HepG2 (cell line): ENCODE measurements at regions of chr6 and their contacts with region 1.

Region 1: DNA sequence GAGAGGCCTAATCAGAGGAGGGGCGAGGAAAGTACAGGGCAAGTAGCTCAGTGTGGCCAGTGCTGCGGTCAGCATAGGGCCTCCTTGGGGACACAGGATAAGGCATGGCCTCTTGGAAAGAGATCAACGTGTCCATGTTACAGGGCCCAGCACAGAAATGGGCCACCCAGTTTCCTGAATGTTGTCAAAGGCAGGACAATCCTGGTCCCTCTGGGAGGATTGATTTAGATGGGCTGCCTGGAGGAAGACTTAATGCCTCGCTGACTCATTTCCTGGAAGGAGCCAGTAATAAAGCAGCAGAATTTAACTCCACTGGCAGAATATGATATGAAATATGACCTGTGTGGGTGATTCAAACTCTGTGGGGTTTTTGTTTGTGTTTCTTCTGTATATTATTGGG is 16.6 kb downstream of the DDO start:
- DNase-seq: no peak
- ATAC-seq: no peak
- H3K4me3 ChIP-seq: no peak overlapping the region
- H3K27ac ChIP-seq: no peak overlapping the region
- H3K4me1 ChIP-seq: no peaks in the 10 kb centered on the region
- H3K27me3 ChIP-seq: no peaks in the 10 kb centered on the region
- CTCF ChIP-seq: no peak
- EP300 ChIP-seq: no peak
- POLR2A ChIP-seq: no peak
- RAD21 ChIP-seq: no peak

Region 2: DNA sequence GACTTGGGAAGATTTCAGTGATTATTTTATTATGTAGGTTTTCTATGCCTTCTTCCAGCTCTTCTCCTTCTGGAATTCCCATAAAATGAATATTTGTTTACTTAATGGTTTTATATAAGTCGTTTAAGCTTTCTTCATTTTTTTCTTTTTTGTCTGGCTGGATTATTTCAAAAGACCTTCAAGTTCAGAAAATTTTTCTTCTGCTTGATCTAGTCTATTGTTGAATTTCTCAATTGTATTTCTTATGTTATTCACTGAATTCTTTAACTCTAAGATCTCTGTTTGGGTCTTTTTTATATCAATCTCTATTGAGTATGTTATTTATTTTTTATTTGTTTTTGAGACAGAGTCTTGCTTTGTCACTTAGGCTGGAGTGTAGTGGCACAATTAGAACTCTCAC is 1186.1 kb before region 1 on chr6:
- CTCF ChIA-PET with region 1: no interaction called
- POLR2A ChIA-PET with region 1: no interaction called
- in situ Hi-C with region 1: no loop called
- intact Hi-C with region 1: loop called (anchors 10 kb)
- DNase-seq: no peak
- ATAC-seq: no peak
- H3K4me3 ChIP-seq: no peak overlapping the region
- H3K27ac ChIP-seq: no peak overlapping the region
- H3K4me1 ChIP-seq: no peaks in the 10 kb centered on the region
- H3K27me3 ChIP-seq: no peaks in the 10 kb centered on the region; a peak in 1 of 5 replicates
- CTCF ChIP-seq: no peak
- EP300 ChIP-seq: no peak
- POLR2A ChIP-seq: no peak
- RAD21 ChIP-seq: no peak

Region 3: DNA sequence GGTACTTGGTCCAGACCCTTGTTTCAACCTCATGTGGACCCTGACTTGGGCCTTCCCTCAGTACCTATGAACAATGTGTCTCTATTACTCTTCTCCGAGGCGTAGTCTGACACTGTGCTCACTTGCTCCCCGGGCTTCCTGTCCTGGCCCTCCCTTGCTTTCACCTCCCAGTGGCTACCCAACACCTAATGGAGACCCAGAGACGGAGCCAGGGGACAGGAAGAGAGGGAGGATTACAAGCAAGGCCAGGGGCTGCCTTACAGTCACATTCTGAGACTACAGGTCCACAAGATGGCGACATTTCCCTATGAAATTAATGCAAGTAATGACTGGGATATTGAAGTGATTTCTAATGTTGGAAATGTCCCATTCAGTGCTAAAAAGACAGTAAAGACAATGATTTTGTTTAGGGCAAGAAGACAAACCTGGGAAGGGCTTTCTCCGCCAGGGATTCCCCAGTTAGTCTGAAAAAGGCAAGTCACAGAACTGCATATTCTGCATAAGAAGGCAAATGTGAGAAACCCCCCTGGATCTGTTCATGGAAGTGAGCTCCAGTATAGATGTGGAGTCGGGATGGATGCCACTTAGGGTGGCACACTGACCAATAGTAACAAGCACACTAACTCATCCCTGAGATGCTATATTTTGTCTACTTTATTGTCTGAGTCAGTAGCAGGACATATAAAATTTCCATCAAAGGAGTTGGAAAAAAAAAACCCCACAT is 871.7 kb before region 1 on chr6:
- CTCF ChIA-PET with region 1: no interaction called
- POLR2A ChIA-PET with region 1: no interaction called
- in situ Hi-C with region 1: loop called (anchors 25 kb)
- intact Hi-C with region 1: no loop called
- DNase-seq: peak; percentile 65
- ATAC-seq: peak; percentile 97
- H3K4me3 ChIP-seq: no peak overlapping the region; a peak in 1 of 6 replicates
- H3K27ac ChIP-seq: no peak overlapping the region
- H3K4me1 ChIP-seq: no peaks in the 10 kb centered on the region
- H3K27me3 ChIP-seq: no peaks in the 10 kb centered on the region
- CTCF ChIP-seq: peak; percentile 86
- EP300 ChIP-seq: no peak
- POLR2A ChIP-seq: no peak
- RAD21 ChIP-seq: peak; percentile 31; the same call in 1 of the 2 replicates

Region 4: GRCh38 chr6:109705258-109705657 is 693.5 kb before region 1 on chr6:
- CTCF ChIA-PET with region 1: no interaction called
- POLR2A ChIA-PET with region 1: no interaction called
- in situ Hi-C with region 1: loop called (anchors 10 kb)
- intact Hi-C with region 1: no loop called
- DNase-seq: peak; percentile 78
- ATAC-seq: peak; percentile 97
- H3K4me3 ChIP-seq: no peak overlapping the region
- H3K27ac ChIP-seq: no peak overlapping the region
- H3K4me1 ChIP-seq: no peaks in the 10 kb centered on the region
- H3K27me3 ChIP-seq: no peaks in the 10 kb centered on the region
- CTCF ChIP-seq: peak; percentile 96
- EP300 ChIP-seq: no peak
- POLR2A ChIP-seq: no peak
- RAD21 ChIP-seq: peak; percentile 91

Region 5: DNA sequence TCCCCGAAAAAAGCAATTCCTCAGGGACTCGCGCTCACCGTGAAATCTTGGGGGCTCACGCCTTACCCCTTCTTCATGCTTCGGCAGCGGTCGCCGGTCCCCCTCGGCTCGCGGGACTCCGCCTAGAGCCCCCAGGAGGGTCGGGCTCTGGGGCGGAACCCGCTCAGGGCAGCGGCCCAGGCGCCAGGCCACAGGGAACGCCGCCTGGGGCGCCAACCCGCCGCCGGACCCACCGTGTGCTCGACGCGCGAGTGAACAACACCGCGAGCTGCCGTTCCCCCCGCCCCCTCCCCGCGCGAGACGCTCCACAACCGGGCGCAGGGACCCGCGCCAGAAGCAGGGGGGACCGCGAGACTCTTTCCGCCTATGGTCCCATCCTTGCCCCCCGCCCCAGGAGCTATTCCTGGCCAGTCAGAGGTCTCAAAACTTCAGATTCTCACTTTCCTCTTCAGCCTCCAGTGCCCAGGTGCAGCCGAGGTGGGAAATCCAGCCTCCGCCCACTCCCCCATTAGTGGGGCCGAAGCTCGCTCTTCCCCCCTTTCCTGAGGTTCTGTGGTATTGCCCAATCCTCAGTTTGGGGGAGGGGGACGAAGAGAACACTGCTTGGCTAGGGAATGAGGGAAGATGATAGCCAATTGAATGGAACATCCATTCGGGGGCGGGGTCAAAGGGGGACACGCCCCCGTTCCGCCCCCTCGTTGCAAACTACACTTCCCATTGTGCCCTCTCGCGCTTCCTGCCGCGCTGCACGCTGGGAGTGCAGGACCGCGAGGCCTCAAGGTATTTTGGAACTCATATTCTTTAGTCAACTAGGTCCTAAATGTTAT is 219.2 kb before region 1 on chr6 and contains the start of gene WASF1:
- CTCF ChIA-PET with region 1: no interaction called
- POLR2A ChIA-PET with region 1: no interaction called
- in situ Hi-C with region 1: loop called (anchors 10 kb)
- intact Hi-C with region 1: no loop called
- DNase-seq: peak; percentile 96
- ATAC-seq: peak; percentile 85
- H3K4me3 ChIP-seq: peak within 1 kb of the TSS; percentile 83 to 95 (median 94)
- H3K27ac ChIP-seq: peak within 1 kb of the TSS; percentile 86
- H3K4me1 ChIP-seq: peaks cover 44% of the 10 kb centered on the region
- H3K27me3 ChIP-seq: peaks cover 0 to 3% of the 10 kb centered on the region in 2 experiments; a peak in 1 of 5 replicates
- CTCF ChIP-seq: 0 out of 2 replicates have a peak, but pooled peaks have one; percentile 21
- EP300 ChIP-seq: no peak
- POLR2A ChIP-seq: peak in 1 of 2 experiments; percentile 86; a peak in 2 of 4 replicates
- RAD21 ChIP-seq: 0 out of 2 replicates have a peak, but pooled peaks have one; percentile 8
- total RNA-seq, gene WASF1: 8.5 and 10.3 TPM in 2 replicates

Region 6: GRCh38 chr6:110378552-110378951 is 20.2 kb before region 1 on chr6:
- CTCF ChIA-PET with region 1: no interaction called
- POLR2A ChIA-PET with region 1: no interaction called
- in situ Hi-C with region 1: no loop called
- intact Hi-C with region 1: no loop called
- DNase-seq: peak; percentile 66
- ATAC-seq: peak; percentile 99
- H3K4me3 ChIP-seq: peak overlapping the region in 1 of 3 experiments; percentile 52; a peak in 1 of 6 replicates
- H3K27ac ChIP-seq: no peak overlapping the region
- H3K4me1 ChIP-seq: peaks cover 15% of the 10 kb centered on the region
- H3K27me3 ChIP-seq: no peaks in the 10 kb centered on the region; a peak in 1 of 5 replicates
- CTCF ChIP-seq: peak; percentile 67
- EP300 ChIP-seq: no peak
- POLR2A ChIP-seq: no peak
- RAD21 ChIP-seq: peak; percentile 35; the same call in 1 of the 2 replicates

Region 7: DNA sequence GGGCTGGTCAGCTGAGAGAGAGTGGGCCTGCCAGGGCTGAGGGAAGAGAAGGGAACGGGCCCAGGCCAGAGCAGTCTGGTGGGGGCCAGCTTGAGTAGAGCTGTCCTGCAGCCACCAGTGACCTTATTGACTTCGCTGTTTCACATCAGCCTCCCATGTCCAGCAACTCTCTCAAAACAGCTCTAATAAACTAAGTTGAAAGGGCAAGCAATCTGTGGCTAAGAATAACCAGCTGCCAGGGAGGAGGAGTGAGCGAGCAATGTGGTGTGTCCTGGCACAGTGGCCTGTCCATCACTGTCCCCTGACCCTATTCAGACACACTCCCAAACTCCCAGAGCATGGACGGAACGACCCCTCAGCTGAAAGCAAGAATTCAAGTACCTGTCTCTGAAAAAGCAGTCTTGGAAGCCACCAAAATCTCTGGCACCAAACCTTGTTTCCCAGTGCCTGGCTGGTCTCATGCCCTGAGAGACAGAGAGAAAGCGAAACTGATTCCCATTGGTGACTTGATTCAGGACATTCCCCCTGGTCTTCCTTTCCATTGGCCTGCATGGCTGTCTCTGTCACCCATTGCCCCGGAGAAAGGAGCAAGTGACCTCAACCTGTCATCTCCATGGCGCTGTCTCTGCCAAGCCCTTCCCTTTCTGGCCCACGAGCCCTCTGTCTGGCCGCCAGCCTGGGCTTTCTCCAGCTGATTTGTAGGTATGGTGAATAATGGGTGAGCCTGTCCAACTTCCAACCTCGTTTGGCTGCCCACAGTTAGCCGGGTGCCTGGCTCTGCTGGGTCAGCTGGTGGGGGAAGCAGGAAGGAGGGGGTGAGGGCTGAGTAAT is 16.5 kb after region 1 on chr6 and contains the start of gene DDO:
- CTCF ChIA-PET with region 1: no interaction called
- POLR2A ChIA-PET with region 1: no interaction called
- in situ Hi-C with region 1: no loop called
- intact Hi-C with region 1: loop called (anchors 1 kb)
- DNase-seq: peak; percentile 86
- ATAC-seq: peak; percentile 98
- H3K4me3 ChIP-seq: peak within 1 kb of the TSS; percentile 71 to 88 (median 86)
- H3K27ac ChIP-seq: peak within 1 kb of the TSS; percentile 31
- H3K4me1 ChIP-seq: peaks cover 48% of the 10 kb centered on the region
- H3K27me3 ChIP-seq: no peaks in the 10 kb centered on the region; a peak in 1 of 5 replicates
- CTCF ChIP-seq: no peak
- EP300 ChIP-seq: no peak
- POLR2A ChIP-seq: 0 out of 4 replicates have a peak, but pooled peaks of 1 of the 2 experiments have one; percentile 26
- RAD21 ChIP-seq: no peak
- total RNA-seq, gene DDO: 10.3 and 14.6 TPM in 2 replicates